Cardiac septum (tissue), 1 donor: ENCODE measurements at regions of chr2 and their contacts with region 1.

Region 1: GRCh38 chr2:128494640-128495321 is 176.1 kb upstream of the HS6ST1 start:
- DNase-seq: no peak

Region 2: DNA sequence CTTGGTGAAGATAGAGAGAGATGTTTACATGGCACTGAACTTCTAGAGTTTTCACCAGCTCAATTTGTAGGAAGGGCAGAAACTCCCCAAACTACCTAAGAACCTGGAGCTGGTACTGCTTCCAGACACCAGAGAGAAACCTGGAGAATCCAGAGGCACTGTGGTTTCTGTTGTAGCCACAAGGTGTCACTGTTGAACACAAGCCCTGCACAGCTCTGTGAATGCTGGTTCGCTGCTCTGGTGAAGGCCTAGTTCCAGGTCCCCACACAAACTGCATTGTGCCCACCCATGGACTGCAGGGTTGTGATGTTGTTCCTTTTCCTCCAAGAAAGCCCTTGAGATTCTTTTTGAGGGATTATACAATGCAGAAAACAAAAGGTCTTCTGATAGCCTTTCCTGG is 25.6 kb before region 1 on chr2:
- intact Hi-C with region 1: loop called (anchors 1 kb)
- DNase-seq: peak; percentile 47